ENCODE measurements at regions of chr3 and their contacts with region 1.

Region 1: GRCh38 chr3:51941798-51942602 is at the starts of genes PARP3 and RRP9:
- DNase-seq: peak; percentile 100
- H3K4me3 Mint-ChIP-seq: peak within 1 kb of the TSS; percentile 88
- H3K27ac Mint-ChIP-seq: peak within 1 kb of the TSS; percentile 82
- H3K4me1 Mint-ChIP-seq: peaks cover 33% of the 10 kb centered on the region
- H3K27me3 Mint-ChIP-seq: no peaks in the 10 kb centered on the region
- total RNA-seq, gene PARP3: 10.0 to 11.1 TPM
- total RNA-seq, gene RRP9: 24.6 to 25.0 TPM

Region 2: DNA sequence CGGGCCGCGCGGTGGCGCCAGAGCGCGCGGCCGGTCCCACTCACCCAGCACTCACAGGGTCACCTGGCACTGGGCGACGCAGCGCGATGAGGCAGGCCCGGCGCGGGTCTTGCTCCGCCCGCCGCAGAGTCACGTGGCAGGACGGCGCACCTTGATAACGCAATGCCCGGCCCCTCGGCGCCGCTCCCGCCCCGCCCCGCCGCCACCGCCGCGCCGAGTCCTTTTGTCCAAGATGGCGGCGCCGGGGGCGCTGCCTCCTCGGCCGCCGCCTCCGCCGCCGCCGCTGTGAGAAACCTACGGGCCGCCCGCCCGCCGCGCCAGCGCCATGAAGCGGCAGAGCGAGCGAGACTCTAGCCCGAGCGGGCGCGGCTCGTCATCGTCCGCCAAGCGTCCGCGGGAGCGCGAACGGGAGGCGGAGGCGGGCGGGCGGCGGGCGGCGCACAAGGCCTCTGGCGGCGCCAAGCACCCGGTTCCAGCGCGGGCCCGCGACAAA is 550.9 kb before region 1 on chr3 and contains the start of gene RBM15B:
- CTCF ChIA-PET with region 1: no interaction called
- intact Hi-C with region 1: loop called (anchors 2 kb)
- DNase-seq: peak; percentile 98
- H3K4me3 Mint-ChIP-seq: peak within 1 kb of the TSS; percentile 81
- H3K27ac Mint-ChIP-seq: peak within 1 kb of the TSS; percentile 85
- H3K4me1 Mint-ChIP-seq: peaks cover 77% of the 10 kb centered on the region
- H3K27me3 Mint-ChIP-seq: no peaks in the 10 kb centered on the region
- total RNA-seq, gene RBM15B: 12.8 to 13.5 TPM

Region 3: GRCh38 chr3:51860703-51861665 is 81.0 kb before region 1 on chr3 and contains the start of gene IQCF2:
- CTCF ChIA-PET with region 1: no interaction called
- intact Hi-C with region 1: no loop called
- DNase-seq: no peak
- H3K4me3 Mint-ChIP-seq: no peak within 1 kb of the TSS
- H3K27ac Mint-ChIP-seq: no peak within 1 kb of the TSS
- H3K4me1 Mint-ChIP-seq: no peaks in the 10 kb centered on the region
- H3K27me3 Mint-ChIP-seq: peaks cover 2% of the 10 kb centered on the region
- total RNA-seq, gene IQCF2: not detected

Region 4: DNA sequence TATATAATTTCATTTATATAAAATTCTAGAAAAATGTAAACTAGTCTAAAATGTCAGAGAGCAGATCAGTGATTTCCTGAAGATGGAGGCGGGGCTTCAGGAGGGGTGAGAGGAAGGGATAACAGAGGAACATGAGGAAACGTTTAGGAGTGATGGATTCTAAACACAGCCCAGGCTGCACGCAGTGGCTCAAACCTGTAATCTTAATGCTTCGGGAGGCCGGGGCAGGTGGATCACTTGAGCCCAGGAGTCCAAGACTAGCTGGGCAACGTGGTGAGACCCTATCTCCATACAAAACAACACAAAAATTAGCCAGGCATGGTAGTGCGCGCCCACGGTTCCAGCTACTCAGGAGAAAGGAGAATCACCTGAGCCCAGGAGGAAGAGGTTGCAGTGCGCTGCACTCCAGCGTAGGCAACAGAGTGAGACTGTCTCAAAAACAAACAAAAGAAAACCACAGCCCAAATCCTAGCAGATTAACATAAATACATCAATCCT is 20.9 kb before region 1 on chr3:
- CTCF ChIA-PET with region 1: no interaction called
- intact Hi-C with region 1: no loop called
- DNase-seq: no peak
- H3K4me3 Mint-ChIP-seq: no peak overlapping the region
- H3K27ac Mint-ChIP-seq: no peak overlapping the region
- H3K4me1 Mint-ChIP-seq: no peaks in the 10 kb centered on the region
- H3K27me3 Mint-ChIP-seq: no peaks in the 10 kb centered on the region

Region 5: GRCh38 chr3:51968170-51968775 is 26.3 kb after region 1 on chr3:
- CTCF ChIA-PET with region 1: interaction called, 25 read pairs
- intact Hi-C with region 1: no loop called
- DNase-seq: no peak
- H3K4me3 Mint-ChIP-seq: peak overlapping the region; percentile 80
- H3K27ac Mint-ChIP-seq: no peak overlapping the region
- H3K4me1 Mint-ChIP-seq: peaks cover 25% of the 10 kb centered on the region
- H3K27me3 Mint-ChIP-seq: no peaks in the 10 kb centered on the region

Region 6: DNA sequence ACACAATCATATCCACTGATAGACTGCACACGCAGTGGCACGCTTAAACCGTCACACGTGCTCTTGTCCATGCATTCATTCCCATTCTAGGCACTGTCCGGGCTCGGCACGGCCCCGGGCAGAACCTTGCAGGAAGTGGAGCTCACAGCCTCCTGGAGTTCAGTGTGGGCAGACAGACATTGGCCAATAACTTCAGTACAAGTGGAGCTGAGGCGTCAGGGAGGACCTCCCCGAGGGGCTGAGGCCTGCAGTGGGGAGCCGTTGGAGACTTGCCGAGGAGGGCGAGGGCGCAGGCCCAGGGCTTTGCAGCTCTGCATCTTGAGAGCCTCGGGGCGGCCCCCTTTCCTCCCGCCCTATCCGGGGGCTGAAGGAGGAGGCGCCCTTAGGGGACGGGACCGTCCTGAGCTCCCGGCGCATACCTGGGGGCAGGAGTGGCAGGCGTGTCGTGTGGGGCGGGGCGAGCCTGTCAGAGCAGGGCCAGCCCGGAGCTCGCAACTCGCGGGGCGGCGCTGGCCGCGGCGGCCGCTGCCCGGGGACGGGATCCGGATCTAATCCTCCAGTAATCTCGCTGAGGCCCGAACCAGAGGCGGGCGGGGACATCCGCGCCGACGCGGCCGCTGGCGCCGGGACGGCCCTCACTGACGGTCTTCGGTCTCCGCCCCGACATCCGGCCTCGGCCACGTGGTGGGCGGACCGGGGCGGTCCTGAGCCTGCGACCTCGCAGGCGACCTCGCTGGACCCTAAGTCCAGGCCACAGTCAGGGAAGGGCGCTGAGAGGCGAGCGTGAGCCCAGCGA is 41.0 kb after region 1 on chr3 and contains the start of gene ACY1:
- CTCF ChIA-PET with region 1: interaction called, 27 read pairs
- intact Hi-C with region 1: loop called (anchors 1 kb)
- DNase-seq: peak; percentile 89
- H3K4me3 Mint-ChIP-seq: peak within 1 kb of the TSS; percentile 95
- H3K27ac Mint-ChIP-seq: peak within 1 kb of the TSS; percentile 91
- H3K4me1 Mint-ChIP-seq: peaks cover 29% of the 10 kb centered on the region
- H3K27me3 Mint-ChIP-seq: no peaks in the 10 kb centered on the region
- total RNA-seq, gene ACY1: 62.1 to 68.9 TPM

Region 7: DNA sequence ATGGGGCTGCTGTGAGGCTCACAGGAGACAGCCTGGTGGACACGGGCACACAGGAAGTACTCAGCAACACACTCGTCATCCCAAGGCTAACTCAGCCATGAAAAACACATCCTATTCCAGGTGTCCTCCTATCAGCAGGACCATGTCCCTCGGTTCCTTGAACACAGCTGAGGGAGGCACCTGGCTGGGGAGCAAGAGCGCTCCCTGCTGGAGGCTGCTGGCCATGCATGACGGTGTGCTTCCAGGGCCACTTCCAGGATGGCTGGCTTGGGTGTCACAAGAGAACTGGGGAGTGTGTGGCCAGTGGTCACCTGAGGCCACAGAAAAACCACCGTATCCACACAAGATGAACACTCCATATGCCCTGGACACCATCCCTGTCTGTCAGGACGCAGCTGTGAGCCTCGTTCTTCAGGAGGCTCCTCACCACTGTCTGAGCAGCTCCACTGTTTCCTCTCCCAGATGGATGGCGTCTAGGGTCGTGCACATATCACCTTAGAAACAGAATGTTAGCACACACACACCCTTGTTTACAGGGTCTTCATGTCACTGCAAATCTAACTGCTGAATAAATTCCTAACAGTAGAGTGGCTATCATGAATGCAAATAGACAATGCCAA is 181.2 kb after region 1 on chr3:
- CTCF ChIA-PET with region 1: no interaction called
- intact Hi-C with region 1: loop called (anchors 1 kb)
- DNase-seq: peak; percentile 73
- H3K4me3 Mint-ChIP-seq: no peak overlapping the region
- H3K27ac Mint-ChIP-seq: no peak overlapping the region
- H3K4me1 Mint-ChIP-seq: peaks cover 3% of the 10 kb centered on the region
- H3K27me3 Mint-ChIP-seq: no peaks in the 10 kb centered on the region

Region 8: GRCh38 chr3:52154117-52155094 is 212.4 kb after region 1 on chr3 and contains the start of gene POC1A:
- CTCF ChIA-PET with region 1: no interaction called
- intact Hi-C with region 1: loop called (anchors 1 kb)
- DNase-seq: peak; percentile 96
- H3K4me3 Mint-ChIP-seq: peak within 1 kb of the TSS; percentile 91
- H3K27ac Mint-ChIP-seq: peak within 1 kb of the TSS; percentile 92
- H3K4me1 Mint-ChIP-seq: peaks cover 18% of the 10 kb centered on the region
- H3K27me3 Mint-ChIP-seq: no peaks in the 10 kb centered on the region
- total RNA-seq, gene POC1A: 32.3 to 32.7 TPM